Testis (tissue), 5 donors: ENCODE measurements at regions of chr12 and their contacts with region 1.

Region 1: GRCh38 chr12:55926738-55927587 is 731 bp downstream of the PYM1 start:
- DNase-seq: peak; percentile 92
- H3K4me3 ChIP-seq: peak overlapping the region; percentile 89 to 94
- H3K27ac ChIP-seq: peak overlapping the region; percentile 97 to 99
- H3K4me1 ChIP-seq: peaks cover 14% of the 10 kb centered on the region
- H3K27me3 ChIP-seq: no peaks in the 10 kb centered on the region
- CTCF ChIP-seq: peak; percentile 64 to 76 (median 65)
- POLR2A ChIP-seq: peak; percentile 14

Region 2: DNA sequence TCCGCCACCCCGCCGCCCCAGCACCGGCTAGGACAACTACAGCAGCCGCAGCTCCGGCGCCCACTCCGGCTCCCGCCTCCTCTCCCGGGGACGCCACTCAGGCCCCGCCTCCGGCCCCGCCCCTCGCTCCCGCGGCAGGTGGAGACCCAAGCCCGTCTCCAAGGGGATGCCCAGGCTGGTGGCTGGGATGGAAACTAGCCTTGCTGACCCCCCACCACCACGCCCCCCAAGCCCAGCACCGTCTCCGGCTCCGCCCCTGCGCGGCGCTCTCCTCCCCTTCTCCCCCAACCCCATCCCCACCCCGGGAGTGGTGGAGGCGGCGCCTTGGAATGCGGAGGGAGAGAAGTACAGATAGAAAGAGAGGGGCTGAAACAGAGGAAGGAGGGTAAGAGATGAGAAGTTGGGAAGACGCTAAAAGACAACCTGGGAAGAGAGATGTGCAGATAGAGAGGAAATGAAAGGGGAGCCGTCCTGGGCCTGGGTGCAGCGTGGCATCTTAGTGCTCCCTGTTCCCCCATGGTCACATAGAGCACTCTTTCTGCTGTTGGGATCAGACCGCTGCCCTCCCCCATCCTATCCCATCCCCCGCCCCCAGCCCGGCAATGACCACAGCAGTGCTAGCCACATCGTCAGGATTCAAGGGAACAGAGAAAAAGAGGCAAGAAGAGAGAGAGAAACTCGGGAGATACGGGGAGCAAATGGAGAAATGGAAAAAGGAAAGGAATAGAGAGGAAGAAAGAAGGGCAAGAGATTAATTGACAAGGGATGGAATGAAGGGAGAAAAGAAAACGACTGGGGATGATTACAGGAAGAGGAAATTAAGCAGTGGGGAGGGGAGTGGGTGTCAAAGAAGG is 218.9 kb before region 1 on chr12 and contains the start of gene ITGA7:
- intact Hi-C with region 1: no loop called
- DNase-seq: peak; percentile 76
- H3K4me3 ChIP-seq: peak within 1 kb of the TSS; percentile 52 to 67
- H3K27ac ChIP-seq: peak within 1 kb of the TSS in 1 of 2 donors; percentile 24
- H3K4me1 ChIP-seq: peaks cover 26% of the 10 kb centered on the region
- H3K27me3 ChIP-seq: no peaks in the 10 kb centered on the region
- CTCF ChIP-seq: no peak
- POLR2A ChIP-seq: no peak
- total RNA-seq, gene ITGA7: 26.4 to 30.6 TPM

Region 3: DNA sequence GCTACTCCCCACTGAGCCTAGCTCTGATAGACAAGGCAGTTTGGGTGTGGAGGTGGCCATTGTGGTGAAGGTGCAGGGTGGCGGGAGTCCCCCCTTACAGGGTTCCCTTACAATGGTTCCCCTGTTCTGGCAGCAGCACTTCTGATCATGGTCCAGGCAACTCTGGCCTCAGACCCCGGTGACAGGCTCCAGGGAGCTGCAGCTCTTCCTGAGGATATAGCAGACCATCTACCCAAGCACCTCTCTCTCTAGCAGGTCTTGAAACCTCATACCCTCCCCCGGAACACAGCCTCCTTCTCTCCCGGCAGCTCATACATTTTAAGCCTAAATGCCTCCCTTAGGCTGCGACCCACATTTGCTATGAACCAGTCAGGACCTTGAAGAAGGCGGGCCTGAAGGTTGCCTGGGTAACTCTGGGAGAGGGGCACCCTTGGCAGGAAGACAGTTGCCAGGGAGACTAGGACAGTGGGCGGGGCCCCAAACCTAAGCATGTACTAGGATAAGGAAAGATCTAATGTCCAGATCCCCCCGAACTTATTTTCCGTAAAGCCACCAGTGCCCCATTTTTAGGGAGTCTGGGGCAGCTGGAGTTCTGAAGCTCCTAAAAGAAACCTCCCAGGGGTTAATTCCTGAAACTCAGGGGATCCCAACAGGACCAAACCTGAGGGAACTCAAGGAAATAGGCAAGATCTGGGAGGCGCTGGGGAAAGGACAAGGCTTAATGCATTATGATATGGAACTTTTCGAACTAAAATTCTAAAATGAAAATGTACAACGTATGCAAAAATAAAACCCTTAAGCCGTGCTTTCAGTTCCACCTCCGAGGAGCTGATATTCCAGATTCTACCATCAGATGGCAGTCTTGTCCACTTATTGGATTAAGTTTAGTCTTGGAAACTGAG is 188.6 kb before region 1 on chr12:
- intact Hi-C with region 1: loop called (anchors 10 kb)
- DNase-seq: peak; percentile 93
- H3K4me3 ChIP-seq: peak overlapping the region; percentile 46 to 69
- H3K27ac ChIP-seq: peak overlapping the region; percentile 69 to 85
- H3K4me1 ChIP-seq: peaks cover 15% of the 10 kb centered on the region
- H3K27me3 ChIP-seq: no peaks in the 10 kb centered on the region
- CTCF ChIP-seq: peak; percentile 81 to 97 (median 96)
- POLR2A ChIP-seq: no peak

Region 4: DNA sequence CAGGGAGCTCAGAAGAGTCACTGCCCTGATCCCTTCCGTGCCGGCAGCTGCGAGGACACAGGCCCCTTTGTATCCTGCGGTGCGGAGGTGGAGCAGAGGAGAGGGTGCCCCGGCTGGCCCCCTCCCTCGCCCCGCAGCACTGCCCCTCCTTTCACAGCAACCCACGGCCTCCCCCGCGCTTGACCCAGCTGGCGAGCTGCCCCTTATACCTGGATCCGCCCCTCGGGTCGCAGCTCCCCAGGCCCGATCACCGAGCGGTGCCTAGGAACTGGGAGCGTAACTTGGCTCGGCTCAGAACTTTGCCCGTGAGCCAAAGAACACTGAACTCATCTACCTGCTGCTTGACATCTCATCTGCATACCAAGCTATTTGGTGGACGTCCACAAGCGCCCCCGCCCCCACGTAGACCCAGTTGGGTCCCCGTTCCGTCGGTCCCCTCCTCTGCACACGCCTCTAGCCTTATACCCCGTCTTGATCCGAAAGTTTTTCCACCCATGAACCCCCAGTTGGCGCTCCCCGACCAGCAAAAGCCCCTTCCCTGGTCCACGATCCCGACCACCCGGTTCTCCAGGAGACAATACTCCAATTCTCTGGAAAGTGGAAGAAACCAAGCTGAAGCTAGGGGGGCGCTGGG is 96.9 kb before region 1 on chr12:
- intact Hi-C with region 1: loop called (anchors 10 kb)
- DNase-seq: peak; percentile 66
- H3K4me3 ChIP-seq: peak overlapping the region; percentile 88 to 97
- H3K27ac ChIP-seq: peak overlapping the region; percentile 95 to 96
- H3K4me1 ChIP-seq: peaks cover 34% of the 10 kb centered on the region
- H3K27me3 ChIP-seq: no peaks in the 10 kb centered on the region
- CTCF ChIP-seq: no peak
- POLR2A ChIP-seq: no peak